ENCODE measurements at regions of chr5 and their contacts with region 1.

Region 1: GRCh38 chr5:89676634-89677033 is 732.9 kb downstream of the CETN3 start:
- DNase-seq: no peak
- H3K4me3 ChIP-seq: no peak overlapping the region
- H3K27ac ChIP-seq: no peak overlapping the region
- H3K4me1 ChIP-seq: no peaks in the 10 kb centered on the region
- H3K27me3 ChIP-seq: no peaks in the 10 kb centered on the region
- CTCF ChIP-seq: no peak
- POLR2A ChIP-seq: no peak

Region 2: DNA sequence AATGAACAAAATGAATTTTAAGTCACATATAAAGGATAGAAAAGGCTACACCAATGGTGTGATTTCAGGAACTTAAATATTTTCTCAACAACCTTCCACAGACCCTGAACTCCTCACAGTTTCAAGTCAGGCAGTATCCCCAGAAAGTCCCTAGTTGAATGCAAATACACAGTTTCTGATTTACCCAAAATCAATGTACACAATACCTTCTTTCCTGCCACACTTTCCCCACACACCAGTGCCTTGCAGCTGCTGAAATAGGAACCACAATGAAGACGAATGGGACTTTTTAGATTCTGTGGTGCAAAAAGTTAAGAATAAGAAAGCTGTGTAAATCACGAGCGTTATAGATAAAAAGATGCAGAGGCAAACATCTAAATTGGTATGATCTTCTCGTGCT is 241.3 kb before region 1 on chr5:
- CTCF ChIA-PET with region 1: no interaction called
- POLR2A ChIA-PET with region 1: no interaction called
- dilution Hi-C with region 1: no loop called
- intact Hi-C with region 1: no loop called
- DNase-seq: no peak
- H3K4me3 ChIP-seq: no peak overlapping the region
- H3K27ac ChIP-seq: no peak overlapping the region
- H3K4me1 ChIP-seq: no peaks in the 10 kb centered on the region
- H3K27me3 ChIP-seq: no peaks in the 10 kb centered on the region
- CTCF ChIP-seq: no peak
- POLR2A ChIP-seq: no peak

Region 3: DNA sequence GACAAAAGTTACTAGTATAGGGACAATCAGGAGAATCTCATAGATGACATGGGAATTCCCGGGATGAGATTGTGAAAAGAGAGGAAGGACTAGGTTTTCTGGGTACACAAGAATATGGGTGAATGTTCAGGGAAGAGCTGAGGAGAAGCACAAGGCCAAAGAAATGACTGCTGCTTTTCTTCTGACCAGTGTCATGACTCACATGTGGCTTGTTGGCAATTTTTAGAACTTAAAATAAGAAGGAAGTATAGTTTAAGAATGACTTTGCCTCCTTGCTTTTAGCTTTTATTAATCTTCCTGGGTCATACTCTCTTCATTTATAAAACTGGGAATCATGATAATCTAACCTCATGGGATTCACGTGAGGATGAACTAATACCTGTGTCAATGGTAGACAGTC is 141.2 kb before region 1 on chr5:
- CTCF ChIA-PET with region 1: no interaction called
- POLR2A ChIA-PET with region 1: no interaction called
- dilution Hi-C with region 1: no loop called
- intact Hi-C with region 1: no loop called
- DNase-seq: no peak
- H3K4me3 ChIP-seq: no peak overlapping the region
- H3K27ac ChIP-seq: no peak overlapping the region
- H3K4me1 ChIP-seq: no peaks in the 10 kb centered on the region
- H3K27me3 ChIP-seq: no peaks in the 10 kb centered on the region
- CTCF ChIP-seq: no peak
- POLR2A ChIP-seq: no peak

Region 4: GRCh38 chr5:89703817-89704216 is 27.2 kb after region 1 on chr5:
- CTCF ChIA-PET with region 1: no interaction called
- POLR2A ChIA-PET with region 1: no interaction called
- dilution Hi-C with region 1: no loop called
- intact Hi-C with region 1: loop called (anchors 2 kb)
- DNase-seq: no peak
- H3K4me3 ChIP-seq: no peak overlapping the region
- H3K27ac ChIP-seq: no peak overlapping the region
- H3K4me1 ChIP-seq: no peaks in the 10 kb centered on the region
- H3K27me3 ChIP-seq: peaks cover 0 to 5% of the 10 kb centered on the region in 2 experiments
- CTCF ChIP-seq: no peak
- POLR2A ChIP-seq: no peak

Measured in endothelial cell of umbilical vein (primary cell).